ENCODE measurements at regions of chr11 and their contacts with region 1.

Region 1: GRCh38 chr11:65471410-65471762 is 27.5 kb upstream of the MALAT1 start:
- DNase-seq: peak; percentile 76
- H3K4me3 Mint-ChIP-seq: no peak overlapping the region
- H3K27ac Mint-ChIP-seq: peak overlapping the region; percentile 99
- H3K4me1 Mint-ChIP-seq: peaks cover 40% of the 10 kb centered on the region
- H3K27me3 Mint-ChIP-seq: no peaks in the 10 kb centered on the region
- CTCF ChIP-seq: no peak

Region 2: GRCh38 chr11:65366340-65366773 is 105.0 kb before region 1 on chr11:
- CTCF ChIA-PET with region 1: interaction called, 8 read pairs
- intact Hi-C with region 1: loop called (anchors 2 kb)
- DNase-seq: peak; percentile 49
- H3K4me3 Mint-ChIP-seq: no peak overlapping the region
- H3K27ac Mint-ChIP-seq: no peak overlapping the region
- H3K4me1 Mint-ChIP-seq: peaks cover 11% of the 10 kb centered on the region
- H3K27me3 Mint-ChIP-seq: no peaks in the 10 kb centered on the region
- CTCF ChIP-seq: peak; percentile 72

Region 3: DNA sequence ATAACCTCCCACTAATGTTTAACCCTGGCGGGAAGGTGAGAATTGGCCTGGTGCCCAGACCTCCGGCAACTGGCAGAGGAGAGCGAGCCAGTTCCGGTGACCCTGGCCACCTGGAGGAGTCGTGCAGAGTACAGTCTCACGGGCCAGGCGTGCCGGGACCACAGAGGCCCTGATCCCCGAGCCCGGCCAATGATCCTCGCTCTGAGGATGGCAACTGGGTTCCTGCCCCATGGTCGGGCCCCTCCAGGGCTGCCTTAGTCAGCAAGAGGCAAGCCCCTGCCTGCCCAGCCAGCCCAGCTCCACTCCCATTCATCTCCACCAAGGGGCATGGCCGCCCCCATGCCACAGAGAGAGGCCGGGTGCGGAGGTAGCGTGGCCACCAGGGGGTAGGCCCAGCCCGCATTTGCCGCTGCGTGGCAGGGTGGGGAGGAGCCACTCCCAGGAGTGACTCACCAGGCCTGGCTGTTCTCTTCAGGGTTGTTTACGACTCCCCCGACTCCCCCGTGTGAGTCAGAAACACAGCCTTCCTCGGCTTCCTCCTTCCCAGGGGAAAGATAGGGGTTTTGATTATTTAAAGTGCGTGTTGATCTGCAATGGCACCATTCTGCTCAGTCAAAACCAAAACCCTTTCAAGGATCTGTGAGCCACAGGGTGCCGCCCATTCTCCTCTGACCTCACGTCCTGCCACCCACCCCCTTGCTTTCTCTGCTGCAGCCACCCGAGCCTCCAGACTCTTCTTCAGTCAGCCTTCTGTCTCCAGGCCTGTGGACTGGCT is 89.2 kb before region 1 on chr11 and contains the start of gene SLC25A45:
- CTCF ChIA-PET with region 1: interaction called, 10 read pairs
- intact Hi-C with region 1: loop called (anchors 2 kb)
- DNase-seq: peak; percentile 98
- H3K4me3 Mint-ChIP-seq: peak within 1 kb of the TSS; percentile 58
- H3K27ac Mint-ChIP-seq: peak within 1 kb of the TSS; percentile 81
- H3K4me1 Mint-ChIP-seq: peaks cover 68% of the 10 kb centered on the region
- H3K27me3 Mint-ChIP-seq: no peaks in the 10 kb centered on the region
- CTCF ChIP-seq: peak; percentile 78
- total RNA-seq, gene SLC25A45: 2.9 and 4.0 TPM in 2 replicates

Region 4: GRCh38 chr11:65418711-65419459 is 52.5 kb before region 1 on chr11:
- CTCF ChIA-PET with region 1: interaction called, 31 read pairs
- intact Hi-C with region 1: loop called (anchors 2 kb)
- DNase-seq: peak; percentile 96
- H3K4me3 Mint-ChIP-seq: peak overlapping the region; percentile 72
- H3K27ac Mint-ChIP-seq: peak overlapping the region; percentile 99
- H3K4me1 Mint-ChIP-seq: peaks cover 68% of the 10 kb centered on the region
- H3K27me3 Mint-ChIP-seq: peaks cover 16% of the 10 kb centered on the region
- CTCF ChIP-seq: no peak

Region 5: DNA sequence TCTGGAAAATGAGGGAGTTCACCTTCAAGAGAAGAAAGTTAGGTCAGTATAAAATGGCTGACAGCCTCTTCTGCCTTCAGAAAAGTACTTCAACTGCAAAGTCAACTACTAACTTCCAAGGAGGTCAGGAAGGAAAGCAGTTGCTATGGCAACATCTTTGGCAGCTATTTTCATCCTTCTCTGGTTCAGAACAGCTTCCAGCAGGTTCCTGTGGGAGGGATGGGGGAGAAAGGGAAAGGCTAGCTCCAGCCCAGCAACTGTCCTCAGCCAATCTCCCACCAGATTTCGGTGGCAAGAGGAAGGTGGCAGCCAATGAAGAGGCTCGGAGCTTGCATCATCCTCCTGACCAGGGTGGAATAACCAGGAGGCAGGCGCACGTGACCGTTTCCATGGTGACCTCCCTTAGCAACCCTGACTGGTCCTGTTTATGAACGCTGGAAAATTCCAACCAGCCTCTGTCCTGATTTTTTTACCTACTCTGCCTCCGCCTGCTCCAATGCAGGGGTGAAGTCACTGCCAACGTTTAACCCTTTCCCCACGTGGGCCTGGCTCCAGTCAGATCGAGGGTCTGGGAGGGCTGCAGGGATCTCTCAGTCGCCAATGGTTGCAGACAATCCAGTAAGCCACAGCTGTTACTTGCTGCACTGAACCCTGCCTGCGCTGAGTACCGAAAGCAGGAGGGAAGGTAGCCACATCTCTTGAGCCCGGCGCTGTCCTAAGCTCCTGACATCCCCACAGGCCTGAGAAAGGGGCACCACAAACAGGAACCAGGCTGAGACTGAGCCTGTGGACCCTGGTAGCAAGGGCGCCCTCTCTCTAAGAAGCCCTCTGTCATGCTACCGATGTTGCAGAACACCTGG is 16.3 kb after region 1 on chr11:
- CTCF ChIA-PET with region 1: interaction called, 12 read pairs
- intact Hi-C with region 1: no loop called
- DNase-seq: peak; percentile 97
- H3K4me3 Mint-ChIP-seq: peak overlapping the region; percentile 44
- H3K27ac Mint-ChIP-seq: peak overlapping the region; percentile 94
- H3K4me1 Mint-ChIP-seq: peaks cover 68% of the 10 kb centered on the region
- H3K27me3 Mint-ChIP-seq: no peaks in the 10 kb centered on the region
- CTCF ChIP-seq: no peak

Region 6: DNA sequence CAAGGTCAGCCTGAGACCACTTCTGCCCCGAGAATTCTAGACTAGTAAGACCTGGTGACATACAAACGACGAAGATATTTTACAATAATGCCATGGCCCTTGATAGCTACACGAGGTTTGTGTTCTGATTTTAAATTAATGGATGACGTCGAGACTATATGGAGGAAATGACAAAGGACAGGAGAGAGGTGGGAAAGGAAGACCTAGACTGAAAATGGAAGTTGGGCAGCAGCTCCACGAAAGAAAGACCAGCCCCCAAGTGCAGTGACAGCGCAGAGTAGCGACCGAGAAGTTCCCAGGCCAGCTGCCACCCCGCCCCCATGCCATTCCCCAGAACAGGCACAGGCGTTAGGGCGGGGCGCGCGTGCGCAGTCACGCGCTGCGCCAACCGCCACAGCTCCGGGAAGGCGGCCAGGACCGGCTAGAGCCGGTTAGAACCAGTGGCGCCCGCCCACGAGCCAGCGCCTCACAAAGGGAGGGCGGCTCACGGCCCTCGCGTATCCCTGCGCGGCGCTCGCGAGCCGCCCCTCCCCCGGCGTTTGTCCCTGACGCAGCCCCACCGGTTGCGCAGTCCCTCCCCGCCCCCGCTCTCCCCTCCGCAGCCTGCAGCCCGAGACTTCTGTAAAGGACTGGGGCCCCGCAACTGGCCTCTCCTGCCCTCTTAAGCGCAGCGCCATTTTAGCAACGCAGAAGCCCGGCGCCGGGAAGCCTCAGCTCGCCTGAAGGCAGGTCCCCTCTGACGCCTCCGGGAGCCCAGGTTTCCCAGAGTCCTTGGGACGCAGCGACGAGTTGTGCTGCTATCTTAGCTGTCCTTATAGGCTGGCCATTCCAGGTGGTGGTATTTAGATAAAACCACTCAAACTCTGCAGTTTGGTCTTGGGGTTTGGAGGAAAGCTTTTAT is 26.0 kb after region 1 on chr11:
- CTCF ChIA-PET with region 1: interaction called, 15 read pairs
- intact Hi-C with region 1: no loop called
- DNase-seq: peak; percentile 99
- H3K4me3 Mint-ChIP-seq: no peak overlapping the region
- H3K27ac Mint-ChIP-seq: no peak overlapping the region
- H3K4me1 Mint-ChIP-seq: peaks cover 37% of the 10 kb centered on the region
- H3K27me3 Mint-ChIP-seq: no peaks in the 10 kb centered on the region
- CTCF ChIP-seq: no peak

Region 7: DNA sequence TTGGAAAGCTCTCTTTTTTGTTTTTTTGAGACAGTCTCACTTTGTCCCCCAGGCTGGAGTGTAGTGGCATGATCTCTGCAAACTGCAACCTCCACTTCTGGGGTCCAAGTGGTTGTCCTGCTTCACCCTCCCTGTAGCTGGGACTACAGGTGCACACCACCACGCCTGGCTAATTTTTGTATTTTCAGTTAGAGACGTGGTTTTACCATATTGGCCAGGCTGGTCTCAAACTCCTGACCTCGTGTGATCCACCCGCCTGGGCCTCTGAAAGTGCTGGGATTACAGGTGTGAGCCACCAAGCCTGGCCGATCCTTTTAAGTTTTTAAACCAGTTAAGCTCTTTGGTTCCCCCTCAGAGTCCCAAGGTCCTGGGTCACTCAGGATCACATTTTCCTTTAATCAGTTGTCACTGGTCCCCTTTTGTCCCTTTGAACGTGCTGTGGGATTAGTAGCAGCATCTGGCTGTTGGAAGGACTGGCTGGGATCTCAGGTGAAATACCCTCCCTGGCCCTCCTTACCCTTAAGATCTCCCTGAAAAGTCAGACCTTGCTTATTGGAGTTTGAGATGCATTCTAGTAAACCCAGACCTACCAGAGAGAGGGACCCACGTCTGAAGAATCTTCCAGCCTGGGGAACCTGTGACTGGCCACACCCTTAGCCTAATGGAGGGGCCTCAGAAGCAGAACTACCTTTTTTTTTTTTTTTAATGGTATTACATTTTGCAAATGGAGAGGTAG is 35.6 kb after region 1 on chr11:
- CTCF ChIA-PET with region 1: interaction called, 20 read pairs
- intact Hi-C with region 1: loop called (anchors 5 kb)
- DNase-seq: peak; percentile 43
- H3K4me3 Mint-ChIP-seq: no peak overlapping the region
- H3K27ac Mint-ChIP-seq: no peak overlapping the region
- H3K4me1 Mint-ChIP-seq: peaks cover 18% of the 10 kb centered on the region
- H3K27me3 Mint-ChIP-seq: peaks cover 9% of the 10 kb centered on the region
- CTCF ChIP-seq: no peak